Caco-2 (cell line): ENCODE measurements at regions of chr12 and their contacts with region 1.

Region 1: DNA sequence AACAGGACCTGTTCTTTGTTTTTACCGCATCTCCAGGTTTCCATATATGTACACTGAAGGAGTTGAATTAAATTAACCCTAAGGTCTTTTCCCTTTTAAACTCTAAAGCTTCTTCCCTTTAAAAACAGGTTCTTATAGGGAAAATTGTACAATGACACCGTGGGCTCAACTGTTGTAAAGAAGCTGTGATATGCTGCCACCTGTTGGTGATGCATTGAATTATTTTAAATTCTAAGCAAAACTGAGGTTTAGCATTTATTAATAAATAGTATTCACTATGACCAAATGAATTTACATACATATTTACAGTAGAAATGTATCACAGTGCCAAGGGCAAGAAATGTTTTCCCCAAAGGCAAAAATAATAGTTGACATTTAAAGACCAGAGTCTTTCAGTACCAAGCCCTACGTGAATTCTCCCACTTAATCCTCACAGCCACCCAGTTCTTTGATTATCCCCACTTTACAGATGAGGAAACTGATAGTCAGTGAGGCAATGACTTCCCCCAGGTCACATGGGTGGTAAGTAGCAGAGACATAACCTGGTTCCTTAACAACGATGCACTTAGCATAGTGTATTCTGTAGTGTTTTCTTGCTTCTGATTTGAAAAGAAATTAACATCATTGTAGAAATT is 35.7 kb upstream of the TMEM263 start:
- DNase-seq: peak in 1 of 2 experiments; percentile 45
- H3K4me3 ChIP-seq: no peak overlapping the region
- H3K4me3 Mint-ChIP-seq: no peak overlapping the region
- H3K27ac Mint-ChIP-seq: no peak overlapping the region
- H3K4me1 ChIP-seq: no peaks in the 10 kb centered on the region
- H3K4me1 Mint-ChIP-seq: no peaks in the 10 kb centered on the region
- H3K27me3 ChIP-seq: no peaks in the 10 kb centered on the region
- H3K27me3 Mint-ChIP-seq: peaks cover 3% of the 10 kb centered on the region
- CTCF ChIP-seq: peak; percentile 62 to 75

Region 2: GRCh38 chr12:106386813-106387535 is 533.1 kb before region 1 on chr12:
- CTCF ChIA-PET with region 1: interaction called, 3 read pairs
- POLR2A ChIA-PET with region 1: no interaction called
- intact Hi-C with region 1: loop called (anchors 1 kb)
- DNase-seq: no peak
- H3K4me3 ChIP-seq: no peak overlapping the region
- H3K4me3 Mint-ChIP-seq: no peak overlapping the region
- H3K27ac Mint-ChIP-seq: no peak overlapping the region
- H3K4me1 ChIP-seq: no peaks in the 10 kb centered on the region
- H3K4me1 Mint-ChIP-seq: peaks cover 8% of the 10 kb centered on the region
- H3K27me3 ChIP-seq: no peaks in the 10 kb centered on the region
- H3K27me3 Mint-ChIP-seq: no peaks in the 10 kb centered on the region
- CTCF ChIP-seq: no peak

Region 3: GRCh38 chr12:106760184-106760531 is 159.9 kb before region 1 on chr12:
- CTCF ChIA-PET with region 1: no interaction called
- POLR2A ChIA-PET with region 1: no interaction called
- intact Hi-C with region 1: no loop called
- DNase-seq: no peak
- H3K4me3 ChIP-seq: no peak overlapping the region
- H3K4me3 Mint-ChIP-seq: no peak overlapping the region
- H3K27ac Mint-ChIP-seq: no peak overlapping the region
- H3K4me1 ChIP-seq: no peaks in the 10 kb centered on the region
- H3K4me1 Mint-ChIP-seq: no peaks in the 10 kb centered on the region
- H3K27me3 ChIP-seq: no peaks in the 10 kb centered on the region
- H3K27me3 Mint-ChIP-seq: no peaks in the 10 kb centered on the region
- CTCF ChIP-seq: no peak

Region 4: DNA sequence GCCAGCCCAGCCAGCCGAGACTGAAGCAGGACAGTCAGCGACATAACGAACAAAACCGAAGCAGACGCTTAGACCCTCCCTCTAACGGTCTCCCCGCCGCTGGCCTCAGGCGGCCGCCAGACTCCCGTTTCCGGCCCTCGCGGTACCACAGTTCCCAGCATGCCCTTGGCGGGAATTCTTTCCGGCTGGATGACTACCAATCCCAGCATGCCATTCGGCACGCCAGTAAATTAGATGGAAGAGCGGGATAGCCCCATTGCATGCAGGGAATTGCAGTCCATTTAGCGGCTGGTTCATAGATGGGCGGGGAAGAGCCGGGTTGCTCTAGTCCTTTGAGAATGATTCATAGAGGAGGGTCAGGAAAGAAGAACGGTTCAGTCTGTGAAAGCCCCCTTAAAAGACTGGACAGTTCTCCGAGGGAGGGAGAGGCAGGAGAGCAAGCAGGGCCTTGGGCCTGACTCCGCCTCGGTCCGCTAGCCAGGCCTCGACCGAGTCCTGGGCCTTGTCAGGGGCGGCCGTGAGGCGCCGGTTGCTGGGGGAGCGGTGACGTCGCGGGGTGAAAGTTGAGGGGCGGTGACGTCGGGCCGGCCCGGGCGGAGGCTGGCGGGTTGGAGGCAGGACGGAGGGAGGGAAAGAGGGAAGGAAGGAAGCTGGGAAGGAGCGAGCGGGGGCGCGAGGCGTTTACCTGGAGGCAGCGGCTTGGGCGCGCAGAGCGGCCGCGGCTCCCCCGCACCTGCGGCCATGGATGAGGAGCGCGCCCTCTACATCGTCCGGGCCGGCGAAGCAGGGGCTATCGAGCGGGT is 145.8 kb before region 1 on chr12 and contains the start of gene RIC8B:
- CTCF ChIA-PET with region 1: no interaction called
- POLR2A ChIA-PET with region 1: no interaction called
- intact Hi-C with region 1: loop called (anchors 1 kb)
- DNase-seq: peak; percentile 96 to 98
- H3K4me3 ChIP-seq: peak within 1 kb of the TSS; percentile 79
- H3K4me3 Mint-ChIP-seq: peak within 1 kb of the TSS; percentile 95
- H3K27ac Mint-ChIP-seq: peak within 1 kb of the TSS; percentile 98
- H3K4me1 ChIP-seq: peaks cover 11% of the 10 kb centered on the region; the same call in 1 of the 2 replicates
- H3K4me1 Mint-ChIP-seq: peaks cover 14% of the 10 kb centered on the region
- H3K27me3 ChIP-seq: no peaks in the 10 kb centered on the region
- H3K27me3 Mint-ChIP-seq: no peaks in the 10 kb centered on the region
- CTCF ChIP-seq: peak in 1 of 2 experiments; percentile 7
- total RNA-seq, gene RIC8B: 7.8 and 7.9 TPM in 2 replicates